Activated B cell treated with CpG ODN at 0.5 μM for 24 hours (primary cell): ENCODE measurements at regions of chr12 and their contacts with region 1.

Region 1: GRCh38 chr12:55829967-55830600 is 697 bp upstream of the DNAJC14 start:
- DNase-seq: peak; percentile 32
- ATAC-seq: peak; percentile 13
- H3K4me3 Mint-ChIP-seq: peak overlapping the region; percentile 97
- H3K27ac Mint-ChIP-seq: peak overlapping the region; percentile 91
- H3K4me1 Mint-ChIP-seq: peaks cover 51% of the 10 kb centered on the region
- H3K27me3 Mint-ChIP-seq: no peaks in the 10 kb centered on the region
- CTCF ChIP-seq: no peak

Region 2: DNA sequence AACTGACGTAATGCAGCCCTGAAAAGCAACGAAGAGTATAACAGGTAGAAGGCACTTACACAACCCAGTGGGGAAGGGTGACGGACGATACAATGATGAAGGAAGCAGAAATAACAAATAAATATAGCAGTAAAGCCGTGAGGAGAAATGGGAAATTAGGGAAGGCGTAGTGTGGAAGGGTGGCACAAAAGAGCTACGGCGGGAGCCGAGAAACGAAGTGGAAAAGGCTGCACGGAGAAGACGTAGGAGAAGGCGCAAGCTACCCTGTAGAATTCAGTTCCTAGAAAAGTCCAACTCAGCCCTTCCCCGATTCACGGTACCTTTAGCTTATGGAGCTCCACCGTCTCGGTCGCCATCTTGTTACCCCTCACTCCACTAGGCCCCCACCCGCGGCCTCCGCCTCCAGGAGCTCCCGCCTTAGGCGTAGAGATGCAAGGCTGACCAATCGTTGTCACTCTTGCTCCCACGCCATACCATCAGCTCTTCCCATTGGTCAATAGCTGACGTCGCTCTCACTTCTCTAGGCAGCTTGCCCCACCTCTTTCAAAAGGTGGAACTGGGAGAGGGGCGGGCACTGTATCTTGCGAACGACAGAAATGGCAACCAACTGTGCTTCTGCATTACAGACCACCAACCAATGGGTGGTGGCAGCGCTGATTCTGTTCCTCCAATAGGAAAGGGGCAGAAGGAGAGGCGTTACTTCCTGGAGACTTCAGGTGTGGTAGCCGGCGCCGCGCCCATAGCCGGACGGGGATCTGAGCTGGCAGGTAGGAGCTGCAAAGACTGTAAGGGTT is 12.5 kb before region 1 on chr12 and contains the starts of genes ORMDL2 and SARNP:
- CTCF ChIA-PET with region 1: interaction called, 5 read pairs
- POLR2A ChIA-PET with region 1: interaction called, 166 read pairs
- intact Hi-C with region 1: loop called (anchors 1 kb)
- DNase-seq: peak; percentile 80
- ATAC-seq: peak; percentile 94
- H3K4me3 Mint-ChIP-seq: no peak within 1 kb of the TSS
- H3K27ac Mint-ChIP-seq: no peak within 1 kb of the TSS
- H3K4me1 Mint-ChIP-seq: peaks cover 21% of the 10 kb centered on the region
- H3K27me3 Mint-ChIP-seq: no peaks in the 10 kb centered on the region
- CTCF ChIP-seq: no peak
- total RNA-seq, gene ORMDL2: 68.0 and 70.9 TPM in 2 replicates
- total RNA-seq, gene SARNP: 53.6 and 58.7 TPM in 2 replicates

Region 3: GRCh38 chr12:55932551-55932910 is 102.4 kb after region 1 on chr12:
- CTCF ChIA-PET with region 1: interaction called, 3 read pairs
- POLR2A ChIA-PET with region 1: interaction called, 70 read pairs
- intact Hi-C with region 1: loop called (anchors 1 kb)
- DNase-seq: peak; percentile 27
- ATAC-seq: peak; percentile 42
- H3K4me3 Mint-ChIP-seq: peak overlapping the region; percentile 92
- H3K27ac Mint-ChIP-seq: peak overlapping the region; percentile 98
- H3K4me1 Mint-ChIP-seq: peaks cover 65% of the 10 kb centered on the region
- H3K27me3 Mint-ChIP-seq: no peaks in the 10 kb centered on the region
- CTCF ChIP-seq: no peak

Region 4: DNA sequence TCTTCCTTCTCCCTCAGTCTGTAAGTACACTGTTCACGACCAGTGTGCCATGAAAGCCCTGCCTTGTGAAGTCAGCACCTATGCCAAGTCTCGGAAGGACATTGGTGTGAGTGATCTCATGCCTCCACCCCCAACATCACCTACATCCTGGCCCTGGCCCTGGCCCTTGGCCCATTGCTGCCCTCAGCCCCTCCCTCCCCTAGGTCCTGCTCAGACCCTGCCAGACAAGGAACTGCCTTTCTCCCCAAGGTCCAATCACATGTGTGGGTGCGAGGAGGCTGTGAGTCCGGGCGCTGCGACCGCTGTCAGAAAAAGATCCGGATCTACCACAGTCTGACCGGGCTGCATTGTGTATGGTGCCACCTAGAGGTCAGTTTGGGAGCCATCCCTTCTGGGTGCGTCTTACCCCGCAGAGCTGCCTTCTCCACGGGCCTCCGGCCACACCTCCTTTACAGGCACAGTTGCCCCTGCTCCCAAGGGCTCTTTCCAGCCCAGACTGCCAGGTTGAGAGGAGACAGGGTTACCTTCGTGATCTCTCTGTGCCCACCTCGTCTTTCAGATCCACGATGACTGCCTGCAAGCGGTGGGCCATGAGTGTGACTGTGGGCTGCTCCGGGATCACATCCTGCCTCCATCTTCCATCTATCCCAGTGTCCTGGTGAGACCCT is 110.1 kb after region 1 on chr12:
- CTCF ChIA-PET with region 1: interaction called, 5 read pairs
- POLR2A ChIA-PET with region 1: interaction called, 4 read pairs
- intact Hi-C with region 1: loop called (anchors 1 kb)
- DNase-seq: peak; percentile 63
- ATAC-seq: peak; percentile 99
- H3K4me3 Mint-ChIP-seq: no peak overlapping the region
- H3K27ac Mint-ChIP-seq: peak overlapping the region; percentile 47
- H3K4me1 Mint-ChIP-seq: peaks cover 12% of the 10 kb centered on the region
- H3K27me3 Mint-ChIP-seq: no peaks in the 10 kb centered on the region
- CTCF ChIP-seq: peak; percentile 63

Region 5: GRCh38 chr12:55973598-55974307 is 143.7 kb after region 1 on chr12 and contains the start of gene RAB5B:
- CTCF ChIA-PET with region 1: no interaction called
- POLR2A ChIA-PET with region 1: interaction called, 14 read pairs
- intact Hi-C with region 1: loop called (anchors 1 kb)
- DNase-seq: peak; percentile 83
- ATAC-seq: peak; percentile 87
- H3K4me3 Mint-ChIP-seq: no peak within 1 kb of the TSS
- H3K27ac Mint-ChIP-seq: no peak within 1 kb of the TSS
- H3K4me1 Mint-ChIP-seq: peaks cover 27% of the 10 kb centered on the region
- H3K27me3 Mint-ChIP-seq: no peaks in the 10 kb centered on the region
- CTCF ChIP-seq: no peak
- total RNA-seq, gene RAB5B: 82.1 and 83.8 TPM in 2 replicates

Region 6: GRCh38 chr12:56007564-56008559 is 177.8 kb after region 1 on chr12:
- CTCF ChIA-PET with region 1: no interaction called
- POLR2A ChIA-PET with region 1: interaction called, 3 read pairs
- intact Hi-C with region 1: loop called (anchors 1 kb)
- DNase-seq: peak; percentile 71
- ATAC-seq: peak; percentile 92
- H3K4me3 Mint-ChIP-seq: peak overlapping the region; percentile 88
- H3K27ac Mint-ChIP-seq: peak overlapping the region; percentile 79
- H3K4me1 Mint-ChIP-seq: peaks cover 9% of the 10 kb centered on the region
- H3K27me3 Mint-ChIP-seq: no peaks in the 10 kb centered on the region
- CTCF ChIP-seq: no peak